PC-9 (cell line): ENCODE measurements at regions of chr11 and their contacts with region 1.

Region 1: GRCh38 chr11:63871962-63872799 is 33.3 kb downstream of the MARK2 start:
- DNase-seq: peak; percentile 93 to 99
- H3K4me3 ChIP-seq: peak overlapping the region; percentile 23; the same call in 1 of the 2 replicates
- H3K27ac ChIP-seq: peak overlapping the region; percentile 39
- H3K4me1 ChIP-seq: peaks cover 66% of the 10 kb centered on the region
- H3K27me3 ChIP-seq: no peaks in the 10 kb centered on the region
- CTCF ChIP-seq: peak; percentile 62

Region 2: DNA sequence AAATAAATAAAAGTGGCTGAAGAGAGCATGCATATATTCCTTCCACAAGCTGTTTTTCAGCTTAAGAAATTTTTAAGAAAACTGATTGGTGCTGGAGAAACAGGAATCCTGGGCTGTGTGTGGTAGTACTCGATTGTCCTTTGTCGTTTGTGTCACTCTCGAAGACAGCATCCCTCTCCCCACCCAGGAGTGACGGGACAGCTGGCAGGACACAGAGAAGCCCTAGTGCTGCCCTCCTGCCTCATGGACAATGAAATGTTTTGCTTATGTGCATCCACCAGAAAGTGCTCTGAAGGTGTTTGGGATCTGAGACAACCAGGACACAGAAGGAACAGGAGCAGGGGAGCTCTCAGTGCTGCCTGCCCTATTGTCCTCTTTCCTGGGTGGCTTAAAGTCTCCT is 322.8 kb before region 1 on chr11:
- CTCF ChIA-PET with region 1: no interaction called
- POLR2A ChIA-PET with region 1: no interaction called
- intact Hi-C with region 1: no loop called
- DNase-seq: no peak
- H3K4me3 ChIP-seq: no peak overlapping the region
- H3K27ac ChIP-seq: no peak overlapping the region
- H3K4me1 ChIP-seq: no peaks in the 10 kb centered on the region
- H3K27me3 ChIP-seq: no peaks in the 10 kb centered on the region
- CTCF ChIP-seq: no peak

Region 3: GRCh38 chr11:63756919-63757761 is 115.0 kb before region 1 on chr11:
- CTCF ChIA-PET with region 1: no interaction called
- POLR2A ChIA-PET with region 1: no interaction called
- intact Hi-C with region 1: no loop called
- DNase-seq: no peak
- H3K4me3 ChIP-seq: no peak overlapping the region
- H3K27ac ChIP-seq: no peak overlapping the region
- H3K4me1 ChIP-seq: no peaks in the 10 kb centered on the region
- H3K27me3 ChIP-seq: no peaks in the 10 kb centered on the region
- CTCF ChIP-seq: no peak

Region 4: DNA sequence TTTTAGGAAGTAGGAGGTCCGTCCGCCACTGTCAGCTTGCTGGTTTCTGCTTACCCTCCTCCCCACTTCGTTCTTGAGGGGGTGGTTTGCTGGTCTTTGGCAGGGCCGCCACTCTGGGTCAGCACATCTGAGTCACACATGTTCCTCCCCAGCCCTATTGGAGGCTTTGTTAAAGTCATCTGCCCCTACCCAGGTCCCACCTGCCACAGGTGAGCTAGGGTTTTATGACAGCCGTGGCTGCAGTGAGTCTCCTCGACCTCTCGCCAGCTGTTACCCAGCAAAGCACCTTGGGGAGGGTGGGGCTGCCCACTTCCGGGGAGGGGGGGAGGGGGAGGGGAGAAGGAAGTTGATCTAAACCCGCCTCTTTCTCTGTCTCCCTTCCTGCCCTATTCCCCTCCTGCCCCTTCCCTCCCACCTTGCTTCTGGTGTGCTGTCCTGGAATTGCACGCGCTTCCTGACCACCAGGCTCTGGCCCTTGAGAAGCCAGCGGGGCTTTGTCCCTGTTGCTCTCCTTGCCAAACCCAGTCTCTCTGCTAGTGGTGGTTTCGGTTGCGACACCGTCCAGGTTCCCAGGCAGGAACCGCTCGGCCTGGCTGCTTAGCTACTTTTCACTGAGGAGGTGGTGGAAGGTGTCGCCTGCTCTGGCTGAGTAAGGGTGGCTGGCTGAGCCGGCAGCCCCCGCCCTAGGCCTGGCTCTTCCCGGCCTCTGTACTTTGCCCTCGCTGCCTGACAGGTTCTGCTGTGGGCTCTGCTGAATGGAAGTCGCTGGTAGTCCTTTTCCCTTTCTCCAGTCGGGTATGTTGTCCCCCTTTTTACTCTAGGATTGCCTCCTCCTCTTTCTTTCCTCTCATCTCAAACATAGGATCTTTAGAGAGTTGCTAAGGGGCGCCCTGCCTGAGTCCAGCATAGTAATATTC is 16.2 kb after region 1 on chr11:
- CTCF ChIA-PET with region 1: interaction called, 3 read pairs
- POLR2A ChIA-PET with region 1: interaction called, 4 read pairs
- intact Hi-C with region 1: loop called (anchors 1 kb)
- DNase-seq: peak; percentile 76 to 92
- H3K4me3 ChIP-seq: peak overlapping the region; percentile 58
- H3K27ac ChIP-seq: peak overlapping the region; percentile 95
- H3K4me1 ChIP-seq: peaks cover 36% of the 10 kb centered on the region
- H3K27me3 ChIP-seq: no peaks in the 10 kb centered on the region
- CTCF ChIP-seq: no peak

Region 5: DNA sequence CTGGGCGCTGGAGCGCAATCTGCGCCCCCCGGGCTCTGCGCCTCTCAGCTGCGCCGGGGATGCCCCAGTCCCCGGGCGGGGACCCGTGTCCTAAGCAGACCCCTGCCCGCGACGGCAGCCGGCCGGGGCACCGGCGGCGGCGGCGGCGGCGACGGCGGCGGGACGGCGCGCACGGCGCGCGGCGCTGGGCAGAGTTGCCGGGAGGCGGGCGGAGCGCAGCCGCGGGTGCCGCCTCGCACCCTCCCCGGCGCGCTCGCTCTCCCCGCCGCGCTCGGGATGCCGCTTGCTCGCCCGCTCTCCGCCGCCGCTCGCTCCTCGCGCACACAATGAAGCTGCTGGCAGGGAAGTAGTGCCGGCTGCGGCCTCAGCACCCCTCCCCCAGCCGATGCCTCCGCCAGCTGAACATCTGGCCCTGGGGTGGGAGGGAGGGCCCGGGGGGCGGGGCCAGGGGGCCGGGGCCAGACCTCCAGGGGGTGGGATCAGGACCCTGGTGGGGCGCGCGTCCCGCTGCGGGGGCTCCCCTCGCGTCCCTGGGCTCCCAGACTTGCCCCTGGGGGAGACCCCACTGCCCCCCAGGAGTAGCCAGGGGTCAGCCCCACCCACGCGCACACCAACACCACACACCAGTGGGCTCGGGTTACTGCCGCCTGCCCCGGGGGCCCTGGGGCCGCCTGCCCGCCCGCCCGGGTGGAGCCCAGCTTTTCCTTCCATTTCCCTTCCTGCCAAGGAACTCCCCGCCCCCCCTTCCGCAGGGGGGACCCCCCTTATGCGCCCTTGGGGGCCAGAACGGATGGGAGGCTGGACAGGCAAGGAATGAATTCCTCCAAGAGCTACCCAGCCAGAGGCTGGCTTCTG is 44.9 kb after region 1 on chr11 and contains the start of gene RCOR2:
- CTCF ChIA-PET with region 1: no interaction called
- POLR2A ChIA-PET with region 1: no interaction called
- intact Hi-C with region 1: loop called (anchors 5 kb)
- DNase-seq: peak; percentile 62 to 83
- H3K4me3 ChIP-seq: peak within 1 kb of the TSS; percentile 62
- H3K27ac ChIP-seq: no peak within 1 kb of the TSS
- H3K4me1 ChIP-seq: peaks cover 42% of the 10 kb centered on the region
- H3K27me3 ChIP-seq: no peaks in the 10 kb centered on the region
- CTCF ChIP-seq: no peak
- total RNA-seq, gene RCOR2: 3.4 and 5.2 TPM in 2 replicates

Region 6: GRCh38 chr11:63945477-63946163 is 73.4 kb after region 1 on chr11:
- CTCF ChIA-PET with region 1: interaction called, 9 read pairs
- POLR2A ChIA-PET with region 1: no interaction called
- intact Hi-C with region 1: loop called (anchors 1 kb)
- DNase-seq: peak; percentile 66 to 74
- H3K4me3 ChIP-seq: no peak overlapping the region
- H3K27ac ChIP-seq: no peak overlapping the region
- H3K4me1 ChIP-seq: peaks cover 7% of the 10 kb centered on the region; the same call in 1 of the 2 replicates
- H3K27me3 ChIP-seq: no peaks in the 10 kb centered on the region
- CTCF ChIP-seq: peak; percentile 83